AG04450 (cell line): ENCODE measurements at regions of chr4 and their contacts with region 1.

Region 1: GRCh38 chr4:56575820-56576429 is 70.3 kb downstream of the ARL9 start:
- DNase-seq: peak; percentile 34
- H3K4me3 ChIP-seq: no peak overlapping the region
- H3K27ac ChIP-seq: no peak overlapping the region
- H3K27me3 ChIP-seq: no peaks in the 10 kb centered on the region
- CTCF ChIP-seq: peak; percentile 79

Region 2: GRCh38 chr4:56301181-56302076 is 274.5 kb before region 1 on chr4:
- CTCF ChIA-PET with region 1: no interaction called
- POLR2A ChIA-PET with region 1: no interaction called
- DNase-seq: peak; percentile 68
- H3K4me3 ChIP-seq: no peak overlapping the region
- H3K27ac ChIP-seq: no peak overlapping the region
- H3K27me3 ChIP-seq: no peaks in the 10 kb centered on the region
- CTCF ChIP-seq: peak; percentile 95

Region 3: DNA sequence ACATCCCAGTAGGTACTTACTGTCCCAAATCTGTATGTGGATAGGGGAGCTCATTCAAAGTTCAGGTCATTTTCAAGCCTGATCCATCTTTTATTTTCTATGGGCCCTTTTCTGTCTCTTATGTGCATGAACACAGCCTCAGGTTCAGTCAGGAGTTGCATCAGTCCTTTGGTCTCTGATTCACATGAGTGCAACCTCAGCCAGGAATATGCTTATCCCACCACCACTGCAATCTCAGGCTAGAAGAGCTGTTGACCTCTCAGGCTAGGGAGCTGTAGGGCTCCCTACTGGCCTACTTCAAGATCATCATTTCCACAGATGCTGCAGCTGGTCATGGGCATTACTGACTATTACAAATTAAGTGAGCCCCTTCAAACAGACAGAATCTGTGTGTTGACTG is 215.9 kb before region 1 on chr4:
- CTCF ChIA-PET with region 1: no interaction called
- POLR2A ChIA-PET with region 1: no interaction called
- DNase-seq: peak; percentile 3
- H3K4me3 ChIP-seq: no peak overlapping the region
- H3K27ac ChIP-seq: no peak overlapping the region
- H3K27me3 ChIP-seq: no peaks in the 10 kb centered on the region
- CTCF ChIP-seq: no peak

Region 4: GRCh38 chr4:56799824-56800756 is 224.2 kb after region 1 on chr4:
- CTCF ChIA-PET with region 1: interaction called, 40 read pairs
- POLR2A ChIA-PET with region 1: no interaction called
- DNase-seq: peak; percentile 67
- H3K4me3 ChIP-seq: peak overlapping the region; percentile 71
- H3K27ac ChIP-seq: peak overlapping the region; percentile 57
- H3K27me3 ChIP-seq: peaks cover 3% of the 10 kb centered on the region
- CTCF ChIP-seq: peak; percentile 99

Region 5: DNA sequence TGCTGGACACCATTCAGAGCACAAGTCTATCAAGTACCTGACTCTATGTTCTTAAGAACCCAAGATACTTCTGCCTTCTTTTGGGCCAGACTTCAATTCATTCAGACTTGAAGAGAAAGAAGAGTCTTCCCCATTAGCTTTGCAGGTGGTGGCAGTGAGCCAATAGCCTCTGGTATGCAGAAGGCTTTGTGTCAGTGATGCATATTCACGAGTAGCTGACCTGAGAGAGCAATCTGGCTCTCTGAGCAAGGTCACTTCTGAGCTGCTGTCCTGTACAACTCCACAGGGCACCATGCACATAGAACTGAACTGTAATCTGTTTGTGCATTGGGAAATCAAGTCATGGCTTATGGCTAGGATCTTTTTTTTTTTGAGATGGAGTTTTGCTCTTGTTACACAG is 285.4 kb after region 1 on chr4:
- CTCF ChIA-PET with region 1: interaction called, 10 read pairs
- POLR2A ChIA-PET with region 1: no interaction called
- DNase-seq: no peak
- H3K4me3 ChIP-seq: no peak overlapping the region
- H3K27ac ChIP-seq: no peak overlapping the region
- H3K27me3 ChIP-seq: peaks cover 6% of the 10 kb centered on the region
- CTCF ChIP-seq: no peak